ENCODE measurements at regions of chr1 and their contacts with region 1.

Region 1: GRCh38 chr1:43238085-43238484 is 31.7 kb upstream of the TMEM125 start:
- DNase-seq: peak; percentile 83
- H3K4me3 ChIP-seq: no peak overlapping the region
- H3K27ac ChIP-seq: peak overlapping the region in 2 of 3 donors; percentile 3 to 42
- H3K4me1 ChIP-seq: peaks cover 19 to 36% of the 10 kb centered on the region in 2 donors
- H3K27me3 ChIP-seq: no peaks in the 10 kb centered on the region
- CTCF ChIP-seq: peak; percentile 50 to 87 (median 80)
- POLR2A ChIP-seq: no peak

Region 2: GRCh38 chr1:42971841-42972291 is 266.2 kb before region 1 on chr1:
- intact Hi-C with region 1: no loop called
- DNase-seq: no peak
- H3K4me3 ChIP-seq: no peak overlapping the region
- H3K27ac ChIP-seq: no peak overlapping the region
- H3K4me1 ChIP-seq: no peaks in the 10 kb centered on the region
- H3K27me3 ChIP-seq: no peaks in the 10 kb centered on the region
- CTCF ChIP-seq: no peak
- POLR2A ChIP-seq: no peak

Region 3: DNA sequence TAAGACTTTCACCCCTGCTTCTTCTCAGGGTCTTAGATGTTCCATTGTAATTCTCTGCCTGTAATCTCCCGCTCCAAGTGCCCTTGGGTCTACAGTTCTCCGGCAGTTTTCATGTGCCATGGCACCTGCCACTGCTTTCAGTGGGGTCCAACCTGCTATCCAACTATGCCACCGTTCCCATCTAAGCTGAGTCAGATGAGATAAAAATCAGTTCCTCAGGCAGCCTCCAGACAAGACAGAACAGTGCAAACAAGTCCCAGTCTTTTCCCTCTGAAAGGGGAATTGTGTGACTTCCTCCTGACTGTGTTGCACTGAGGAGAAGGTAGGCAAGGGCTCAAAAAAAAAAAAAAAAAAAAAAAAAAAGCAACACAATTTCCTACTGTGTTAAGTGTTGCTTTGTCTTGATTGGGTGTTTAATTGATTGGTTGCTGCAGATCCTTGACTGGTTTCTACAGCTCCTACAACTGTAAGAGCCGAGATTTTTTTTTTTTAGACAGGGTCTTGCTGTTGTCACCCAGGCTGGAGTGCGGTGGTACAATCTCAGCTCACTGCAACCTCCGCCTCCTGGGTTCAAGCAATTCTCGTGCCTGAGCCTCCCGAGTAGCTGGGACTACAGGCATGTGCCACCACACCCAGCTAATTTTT is 116.7 kb before region 1 on chr1:
- intact Hi-C with region 1: no loop called
- DNase-seq: no peak
- H3K4me3 ChIP-seq: no peak overlapping the region
- H3K27ac ChIP-seq: no peak overlapping the region
- H3K4me1 ChIP-seq: no peaks in the 10 kb centered on the region
- H3K27me3 ChIP-seq: no peaks in the 10 kb centered on the region
- CTCF ChIP-seq: no peak
- POLR2A ChIP-seq: no peak

Region 4: GRCh38 chr1:43156026-43156425 is 82.1 kb before region 1 on chr1:
- intact Hi-C with region 1: no loop called
- DNase-seq: no peak
- H3K4me3 ChIP-seq: no peak overlapping the region
- H3K27ac ChIP-seq: no peak overlapping the region
- H3K4me1 ChIP-seq: no peaks in the 10 kb centered on the region
- H3K27me3 ChIP-seq: no peaks in the 10 kb centered on the region
- CTCF ChIP-seq: no peak
- POLR2A ChIP-seq: no peak

Region 5: GRCh38 chr1:43414634-43415223 is 176.6 kb after region 1 on chr1:
- intact Hi-C with region 1: loop called (anchors 5 kb)
- DNase-seq: peak; percentile 55 to 59
- H3K4me3 ChIP-seq: no peak overlapping the region
- H3K27ac ChIP-seq: no peak overlapping the region
- H3K4me1 ChIP-seq: peaks cover 14 to 20% of the 10 kb centered on the region in 2 donors
- H3K27me3 ChIP-seq: no peaks in the 10 kb centered on the region
- CTCF ChIP-seq: peak in 5 of 6 experiments; percentile 20 to 63 (median 50)
- POLR2A ChIP-seq: no peak

Measured in thyroid gland (tissue), 4 donors.